Cardiac septum (tissue), 1 donor: ENCODE measurements at regions of chr15 and their contacts with region 1.

Region 1: GRCh38 chr15:68559345-68560310 is 19.2 kb upstream of the CORO2B start:
- DNase-seq: peak; percentile 93

Region 2: DNA sequence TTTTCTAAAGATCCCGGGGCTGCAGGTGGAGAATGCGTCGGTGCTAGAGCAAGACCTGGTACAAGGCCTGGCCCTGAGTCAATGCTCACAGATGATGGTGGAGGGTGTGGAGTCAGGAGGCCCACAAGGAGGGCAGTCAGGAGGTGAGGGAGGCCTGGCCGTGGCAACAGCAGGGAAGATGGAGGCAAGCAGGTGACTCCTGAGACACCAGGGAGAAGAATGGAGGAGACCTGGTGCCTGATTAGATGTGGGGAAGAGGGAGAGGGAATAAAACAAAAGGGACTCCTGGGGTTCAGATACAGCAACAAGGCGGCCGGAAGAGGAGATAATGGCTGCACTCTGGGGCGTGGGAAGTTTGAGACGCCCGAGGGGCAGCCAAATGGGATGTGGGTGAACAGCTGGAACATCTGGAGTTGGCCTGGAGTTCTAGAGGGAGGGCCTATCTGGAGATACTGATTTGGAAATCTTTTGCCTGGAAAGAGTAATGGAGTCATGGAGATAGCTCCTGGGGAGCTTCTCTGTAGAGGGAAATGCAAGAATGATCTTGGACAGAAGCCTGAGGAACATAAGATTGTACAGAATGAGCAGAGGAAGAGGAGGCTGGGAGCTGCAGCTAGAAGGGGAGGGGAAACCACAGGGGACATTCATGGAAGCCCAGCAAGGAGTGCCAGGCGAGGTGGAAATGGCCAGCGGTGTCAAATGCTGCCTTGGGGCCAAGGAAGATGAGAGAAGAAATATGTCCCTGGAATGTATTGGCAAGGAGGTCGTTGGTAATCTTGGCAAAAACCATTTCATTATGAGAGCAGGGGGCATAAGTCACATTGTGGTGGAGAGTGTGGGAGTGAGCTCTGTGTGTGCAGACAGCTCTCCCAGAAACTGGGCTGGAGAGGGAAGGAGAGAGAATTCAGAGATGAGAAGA is 48.3 kb before region 1 on chr15:
- intact Hi-C with region 1: no loop called
- DNase-seq: no peak

Region 3: DNA sequence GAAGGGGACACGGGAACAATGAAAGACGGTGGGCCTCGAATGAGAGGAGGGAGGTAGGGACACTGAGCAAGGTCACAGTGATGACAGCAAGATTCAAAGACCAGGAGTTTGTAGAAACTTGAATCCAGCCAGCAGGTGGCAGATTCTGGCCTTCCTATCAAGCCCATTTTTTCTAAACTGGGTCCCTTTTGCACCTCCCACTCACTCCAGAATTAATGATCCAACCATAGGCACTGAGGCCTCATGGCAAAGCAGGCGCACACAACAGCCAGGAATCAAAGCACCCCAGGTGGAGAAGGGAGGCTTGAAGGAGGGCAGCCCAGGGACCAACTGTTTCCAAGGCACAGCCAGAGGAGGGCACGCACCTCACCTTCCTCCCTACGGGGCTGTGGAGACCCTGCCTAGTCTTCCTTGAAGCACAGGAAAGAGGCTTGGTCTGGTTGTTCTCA is 170.9 kb after region 1 on chr15:
- intact Hi-C with region 1: loop called (anchors 5 kb)
- DNase-seq: peak; percentile 70